PC-3 (cell line): ENCODE measurements at regions of chr3 and their contacts with region 1.

Region 1: DNA sequence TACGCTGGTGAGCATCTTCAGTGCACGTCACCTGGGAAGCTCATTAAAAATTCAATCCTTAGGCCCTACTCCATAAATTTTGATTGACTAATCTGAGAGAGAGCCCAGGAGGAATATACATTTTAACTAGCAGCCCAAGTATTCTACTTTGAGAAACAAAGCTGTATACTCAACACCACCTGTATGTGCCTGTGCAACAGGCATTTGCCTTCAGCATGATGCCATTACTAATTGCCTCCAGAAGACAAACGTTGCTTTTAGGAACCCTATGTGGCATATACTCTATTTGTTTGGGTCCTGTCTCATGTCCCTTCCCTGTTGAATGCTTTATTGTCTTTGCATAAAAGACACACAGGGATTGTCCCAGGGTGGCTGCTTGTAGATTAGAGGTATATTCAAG is 7.7 kb downstream of the ASTE1 start:
- DNase-seq: no peak
- ATAC-seq: no peak
- H3K4me3 ChIP-seq: no peak overlapping the region
- H3K27ac ChIP-seq: no peak overlapping the region
- H3K4me1 ChIP-seq: no peaks in the 10 kb centered on the region
- H3K27me3 ChIP-seq: no peaks in the 10 kb centered on the region
- CTCF ChIP-seq: no peak

Region 2: DNA sequence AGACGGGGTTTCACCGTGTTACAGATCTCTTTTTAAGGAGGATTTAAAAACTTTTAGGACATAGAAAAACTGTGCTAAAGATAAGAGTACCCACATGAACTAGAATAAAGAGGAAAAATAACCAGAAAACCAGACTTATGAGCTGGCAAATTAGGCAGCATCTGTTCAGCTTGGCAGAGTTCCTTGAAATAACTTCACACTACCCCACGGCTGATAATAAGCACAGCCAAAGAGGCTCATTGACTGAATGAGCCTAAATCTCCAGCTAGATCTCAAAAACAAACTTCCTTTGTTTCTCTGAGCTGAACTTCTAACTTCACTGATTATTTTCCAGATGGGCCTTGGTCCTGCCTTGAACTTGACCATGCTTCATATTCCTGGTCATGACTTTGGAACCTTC is 245.6 kb before region 1 on chr3:
- CTCF ChIA-PET with region 1: no interaction called
- POLR2A ChIA-PET with region 1: no interaction called
- intact Hi-C with region 1: no loop called
- DNase-seq: no peak
- ATAC-seq: no peak
- H3K4me3 ChIP-seq: no peak overlapping the region
- H3K27ac ChIP-seq: no peak overlapping the region
- H3K4me1 ChIP-seq: no peaks in the 10 kb centered on the region
- H3K27me3 ChIP-seq: no peaks in the 10 kb centered on the region
- CTCF ChIP-seq: no peak

Region 3: GRCh38 chr3:130971208-130971607 is 47.8 kb before region 1 on chr3:
- CTCF ChIA-PET with region 1: no interaction called
- POLR2A ChIA-PET with region 1: no interaction called
- intact Hi-C with region 1: loop called (anchors 5 kb)
- DNase-seq: peak; percentile 38
- ATAC-seq: peak; percentile 55
- H3K4me3 ChIP-seq: no peak overlapping the region
- H3K27ac ChIP-seq: no peak overlapping the region
- H3K4me1 ChIP-seq: peaks cover 13% of the 10 kb centered on the region
- H3K27me3 ChIP-seq: no peaks in the 10 kb centered on the region
- CTCF ChIP-seq: no peak